ENCODE measurements at regions of chr13 and their contacts with region 1.

Region 1: GRCh38 chr13:105894697-105895096 is 640.8 kb downstream of the EFNB2 start:
- DNase-seq: no peak
- ATAC-seq: no peak

Region 2: GRCh38 chr13:105377452-105377851 is 517.2 kb before region 1 on chr13:
- intact Hi-C with region 1: loop called (anchors 5 kb)
- DNase-seq: no peak
- ATAC-seq: no peak